ENCODE measurements at regions of chr2 and their contacts with region 1.

Region 1: DNA sequence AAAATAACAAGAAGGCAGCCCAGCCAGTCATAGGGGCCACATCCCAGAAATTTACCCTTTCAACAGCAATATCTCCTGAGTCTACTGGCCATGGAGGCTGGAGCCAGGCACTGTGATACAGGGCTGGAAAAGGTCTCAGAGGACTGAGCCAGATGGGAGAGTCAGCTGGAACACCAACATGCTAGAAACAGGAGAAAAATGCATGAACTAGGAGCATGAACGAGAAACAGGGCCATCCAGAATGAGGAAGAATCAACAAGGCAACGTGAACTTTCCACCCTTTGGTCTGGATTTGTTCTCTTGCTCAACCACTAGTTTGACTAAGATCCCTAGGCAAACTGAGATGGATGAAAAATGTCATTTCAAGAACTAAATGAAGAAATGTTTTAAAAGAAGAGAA is 13.1 kb downstream of the PID1 start:
- DNase-seq: no peak
- H3K4me3 ChIP-seq: no peak overlapping the region
- H3K27ac ChIP-seq: no peak overlapping the region
- H3K4me1 ChIP-seq: no peaks in the 10 kb centered on the region
- H3K27me3 ChIP-seq: no peaks in the 10 kb centered on the region
- CTCF ChIP-seq: no peak

Region 2: GRCh38 chr2:228786901-228787300 is 471.1 kb before region 1 on chr2:
- intact Hi-C with region 1: no loop called
- DNase-seq: no peak
- H3K4me3 ChIP-seq: no peak overlapping the region
- H3K27ac ChIP-seq: no peak overlapping the region
- H3K4me1 ChIP-seq: no peaks in the 10 kb centered on the region
- H3K27me3 ChIP-seq: no peaks in the 10 kb centered on the region
- CTCF ChIP-seq: no peak

Region 3: GRCh38 chr2:229218329-229218921 is 39.6 kb before region 1 on chr2:
- intact Hi-C with region 1: loop called (anchors 5 kb)
- DNase-seq: no peak
- H3K4me3 ChIP-seq: no peak overlapping the region
- H3K27ac ChIP-seq: no peak overlapping the region
- H3K4me1 ChIP-seq: no peaks in the 10 kb centered on the region
- H3K27me3 ChIP-seq: no peaks in the 10 kb centered on the region
- CTCF ChIP-seq: no peak

Measured in colonic mucosa (tissue), 4 donors.